Calu3 (cell line): ENCODE measurements at regions of chr5 and their contacts with region 1.

Region 1: DNA sequence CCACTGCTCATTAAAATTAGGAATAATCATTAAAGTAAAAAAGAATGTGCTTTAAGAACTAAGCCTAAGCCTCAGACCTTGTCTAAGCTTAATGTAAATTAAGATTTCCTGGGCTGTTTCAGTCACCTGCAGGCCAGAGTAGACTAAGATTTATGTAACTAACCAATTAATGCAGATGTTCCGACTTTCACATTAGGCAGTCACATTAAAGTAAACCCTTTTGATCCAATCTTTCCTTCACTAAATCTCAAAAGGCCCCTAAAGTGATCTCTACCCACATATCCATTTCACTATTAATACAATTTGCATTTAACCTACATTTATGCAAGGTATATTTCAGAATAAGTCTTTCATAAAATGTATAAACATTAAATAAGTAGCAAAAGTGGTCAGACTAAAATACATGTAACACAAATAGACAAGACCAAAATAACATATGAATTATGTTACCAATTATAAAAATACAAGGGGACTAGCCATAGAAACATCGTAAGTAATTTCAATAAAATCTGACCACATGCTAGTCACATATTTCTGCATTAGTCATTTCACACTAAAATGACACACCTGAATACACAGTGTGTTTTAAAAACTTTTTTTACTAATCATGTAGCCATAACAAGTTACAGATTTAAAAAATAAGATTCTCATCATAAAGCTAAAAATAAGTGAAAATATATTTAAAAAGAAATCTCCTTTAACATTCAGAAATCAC is 7.7 kb downstream of the NR3C1 start:
- DNase-seq: no peak
- H3K4me3 Mint-ChIP-seq: peak overlapping the region; percentile 60
- H3K27ac Mint-ChIP-seq: peak overlapping the region; percentile 25
- H3K4me1 Mint-ChIP-seq: peaks cover 31% of the 10 kb centered on the region
- H3K27me3 Mint-ChIP-seq: no peaks in the 10 kb centered on the region
- CTCF ChIP-seq: no peak

Region 2: GRCh38 chr5:142922223-142922952 is 473.4 kb before region 1 on chr5:
- CTCF ChIA-PET with region 1: no interaction called
- intact Hi-C with region 1: loop called (anchors 1 kb)
- DNase-seq: no peak
- H3K4me3 Mint-ChIP-seq: no peak overlapping the region
- H3K27ac Mint-ChIP-seq: no peak overlapping the region
- H3K4me1 Mint-ChIP-seq: peaks cover 63% of the 10 kb centered on the region
- H3K27me3 Mint-ChIP-seq: no peaks in the 10 kb centered on the region
- CTCF ChIP-seq: peak; percentile 1

Region 3: DNA sequence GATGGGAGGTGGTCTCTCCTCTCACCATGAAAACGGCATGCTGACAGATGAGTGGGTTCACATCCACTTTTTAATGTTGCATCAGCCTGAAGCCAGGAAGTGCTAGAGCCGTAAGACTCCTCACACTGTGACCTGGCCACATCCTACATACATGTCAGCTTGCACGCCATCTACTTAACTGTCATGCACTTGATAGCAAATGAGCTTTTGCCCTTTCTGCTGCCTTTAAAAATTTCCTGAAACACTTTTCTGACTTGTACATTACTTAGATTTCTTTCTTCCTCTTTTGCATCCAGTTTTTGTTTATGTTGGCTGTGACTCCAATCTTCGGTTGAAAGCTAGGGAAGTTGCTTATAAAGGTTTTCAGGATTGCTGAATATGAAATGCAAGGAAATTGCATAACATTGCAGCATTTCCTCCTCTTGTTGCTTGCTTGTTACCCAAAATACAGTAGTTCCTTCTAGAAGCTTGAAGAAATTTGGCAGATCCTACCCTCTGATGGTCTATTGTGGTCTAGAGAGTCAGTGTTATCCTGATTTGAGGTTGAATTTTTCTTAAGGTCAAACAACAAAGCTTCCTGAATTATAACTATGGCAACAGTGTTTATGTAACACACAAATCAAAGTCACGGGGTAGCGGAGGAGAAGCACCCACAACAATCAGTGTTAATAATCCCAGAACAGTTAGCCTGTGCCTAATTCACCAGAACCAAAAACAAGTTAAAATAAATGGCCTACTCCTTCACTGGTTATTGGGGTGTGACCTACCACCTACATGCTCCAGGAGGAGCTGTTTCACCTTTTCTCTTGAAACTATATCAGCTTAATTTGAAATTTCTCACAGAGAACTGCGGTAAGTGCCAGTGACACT is 393.1 kb before region 1 on chr5:
- CTCF ChIA-PET with region 1: no interaction called
- intact Hi-C with region 1: loop called (anchors 5 kb)
- DNase-seq: peak; percentile 7
- H3K4me3 Mint-ChIP-seq: no peak overlapping the region
- H3K27ac Mint-ChIP-seq: peak overlapping the region; percentile 56
- H3K4me1 Mint-ChIP-seq: peaks cover 26% of the 10 kb centered on the region
- H3K27me3 Mint-ChIP-seq: no peaks in the 10 kb centered on the region
- CTCF ChIP-seq: no peak

Region 4: GRCh38 chr5:143244000-143244736 is 151.6 kb before region 1 on chr5:
- CTCF ChIA-PET with region 1: interaction called, 3 read pairs
- intact Hi-C with region 1: loop called (anchors 10 kb)
- DNase-seq: peak; percentile 72
- H3K4me3 Mint-ChIP-seq: peak overlapping the region; percentile 39
- H3K27ac Mint-ChIP-seq: peak overlapping the region; percentile 63
- H3K4me1 Mint-ChIP-seq: peaks cover 57% of the 10 kb centered on the region
- H3K27me3 Mint-ChIP-seq: no peaks in the 10 kb centered on the region
- CTCF ChIP-seq: no peak

Region 5: DNA sequence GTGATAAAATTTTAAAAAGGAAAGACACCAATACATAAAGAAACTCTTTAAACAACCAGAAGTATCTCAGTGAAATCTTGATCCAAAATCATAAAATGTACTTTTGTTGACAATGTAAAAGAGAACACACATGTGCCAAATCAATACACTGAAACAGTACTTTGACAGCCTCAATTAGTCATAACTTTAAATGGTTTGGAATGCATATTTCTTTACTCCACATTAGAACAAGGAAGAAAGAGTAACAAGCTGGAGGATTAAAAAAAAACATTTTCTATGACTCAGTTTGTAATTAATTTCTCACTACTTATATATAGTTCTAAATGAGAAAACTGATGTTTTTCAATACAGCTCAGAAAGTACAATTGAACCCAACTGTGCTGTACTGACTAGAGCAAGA is 93.5 kb before region 1 on chr5:
- CTCF ChIA-PET with region 1: no interaction called
- intact Hi-C with region 1: loop called (anchors 5 kb)
- DNase-seq: no peak
- H3K4me3 Mint-ChIP-seq: no peak overlapping the region
- H3K27ac Mint-ChIP-seq: no peak overlapping the region
- H3K4me1 Mint-ChIP-seq: peaks cover 14% of the 10 kb centered on the region
- H3K27me3 Mint-ChIP-seq: no peaks in the 10 kb centered on the region
- CTCF ChIP-seq: no peak

Region 6: DNA sequence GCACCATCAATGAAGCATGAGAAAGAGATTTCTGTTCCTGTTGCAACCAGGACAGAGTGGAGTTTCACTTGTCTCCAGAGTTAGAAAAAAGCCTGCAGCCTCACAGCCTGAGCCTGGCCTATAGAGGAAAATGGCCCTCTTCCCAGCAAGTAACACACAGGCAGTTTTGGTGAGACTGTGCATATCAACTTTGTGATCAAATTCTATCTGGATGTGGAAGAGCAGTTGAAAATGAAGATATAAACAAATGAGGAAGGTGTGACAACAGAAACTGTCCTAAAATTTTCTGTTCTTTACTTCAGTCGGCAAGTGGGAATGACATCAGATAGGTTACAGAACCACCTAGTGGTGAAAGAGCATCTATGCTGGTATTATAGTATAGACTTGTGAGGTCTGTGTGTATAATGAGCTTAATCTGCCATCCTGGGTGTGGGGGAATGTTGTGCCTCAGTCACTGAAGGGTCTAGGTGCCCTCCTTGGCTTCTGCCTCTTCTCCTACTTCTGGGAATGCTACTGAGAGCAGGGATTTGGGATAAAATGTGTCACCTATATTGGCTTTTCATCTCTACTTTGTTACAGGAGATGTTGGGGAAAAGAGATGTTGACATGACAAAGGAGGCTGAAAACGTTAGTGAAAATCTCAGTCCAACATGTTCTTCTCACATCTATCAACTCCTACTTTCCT is 746.5 kb after region 1 on chr5:
- CTCF ChIA-PET with region 1: no interaction called
- intact Hi-C with region 1: loop called (anchors 10 kb)
- DNase-seq: no peak
- H3K4me3 Mint-ChIP-seq: no peak overlapping the region
- H3K27ac Mint-ChIP-seq: no peak overlapping the region
- H3K4me1 Mint-ChIP-seq: peaks cover 26% of the 10 kb centered on the region
- H3K27me3 Mint-ChIP-seq: peaks cover 14% of the 10 kb centered on the region
- CTCF ChIP-seq: no peak